ENCODE measurements at regions of chr14 and their contacts with region 1.

Region 1: GRCh38 chr14:56422703-56423213 is 156.8 kb upstream of the TMEM260 start:
- DNase-seq: peak; percentile 26
- H3K4me3 Mint-ChIP-seq: no peak overlapping the region
- H3K27ac Mint-ChIP-seq: no peak overlapping the region
- H3K4me1 Mint-ChIP-seq: no peaks in the 10 kb centered on the region
- H3K27me3 Mint-ChIP-seq: no peaks in the 10 kb centered on the region

Region 2: DNA sequence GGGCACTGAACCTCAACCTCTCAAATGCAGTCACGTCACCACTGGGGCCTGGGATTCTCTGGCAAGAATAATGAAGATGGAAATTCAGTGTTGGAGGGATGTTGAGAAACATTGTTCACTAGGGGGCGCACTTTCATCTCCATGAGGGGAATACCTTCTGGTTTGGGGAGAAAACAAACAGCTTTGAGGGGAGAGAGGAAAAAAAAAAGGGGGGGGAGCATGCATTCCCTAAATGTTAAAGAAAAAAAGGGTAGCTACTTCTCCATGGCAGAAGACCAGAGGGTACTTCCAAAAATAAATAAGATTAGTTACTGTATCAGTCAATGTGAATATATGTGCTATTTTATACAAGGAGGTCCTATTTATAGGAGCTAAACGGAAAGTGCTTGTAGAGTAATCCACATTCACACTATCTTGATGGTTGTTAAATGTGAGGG is 976.5 kb before region 1 on chr14:
- CTCF ChIA-PET with region 1: interaction called, 3 read pairs
- intact Hi-C with region 1: loop called (anchors 1 kb)
- DNase-seq: peak; percentile 76
- H3K4me3 Mint-ChIP-seq: no peak overlapping the region
- H3K27ac Mint-ChIP-seq: no peak overlapping the region
- H3K4me1 Mint-ChIP-seq: peaks cover 13% of the 10 kb centered on the region
- H3K27me3 Mint-ChIP-seq: no peaks in the 10 kb centered on the region

Region 3: DNA sequence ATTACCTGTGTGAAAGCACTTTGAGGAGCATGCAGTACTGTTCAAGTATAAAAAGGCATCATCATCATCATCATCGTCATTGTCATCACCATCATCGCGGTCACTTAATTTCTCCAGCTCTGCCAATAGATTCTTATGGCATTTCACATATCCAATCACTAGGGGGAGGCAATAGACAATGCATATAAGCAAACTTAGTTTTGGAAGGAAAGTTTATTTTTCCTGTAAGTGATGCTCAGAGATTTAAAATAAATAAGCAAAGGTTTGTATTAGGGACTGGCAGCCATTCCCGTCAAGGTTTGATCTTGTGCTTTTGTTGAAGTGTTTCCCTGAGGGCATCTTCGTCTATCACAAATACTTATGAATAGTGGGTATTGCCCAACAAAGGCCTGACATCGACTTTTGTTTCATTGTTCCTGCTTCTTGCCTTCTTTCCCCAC is 715.4 kb before region 1 on chr14:
- CTCF ChIA-PET with region 1: no interaction called
- intact Hi-C with region 1: loop called (anchors 2 kb)
- DNase-seq: no peak
- H3K4me3 Mint-ChIP-seq: no peak overlapping the region
- H3K27ac Mint-ChIP-seq: no peak overlapping the region
- H3K4me1 Mint-ChIP-seq: no peaks in the 10 kb centered on the region
- H3K27me3 Mint-ChIP-seq: no peaks in the 10 kb centered on the region

Region 4: GRCh38 chr14:55731881-55732498 is 690.8 kb before region 1 on chr14:
- CTCF ChIA-PET with region 1: interaction called, 6 read pairs
- intact Hi-C with region 1: loop called (anchors 1 kb)
- DNase-seq: peak; percentile 77
- H3K4me3 Mint-ChIP-seq: no peak overlapping the region
- H3K27ac Mint-ChIP-seq: no peak overlapping the region
- H3K4me1 Mint-ChIP-seq: no peaks in the 10 kb centered on the region
- H3K27me3 Mint-ChIP-seq: no peaks in the 10 kb centered on the region

Region 5: GRCh38 chr14:55846826-55847446 is 575.8 kb before region 1 on chr14:
- CTCF ChIA-PET with region 1: no interaction called
- intact Hi-C with region 1: loop called (anchors 10 kb)
- DNase-seq: no peak
- H3K4me3 Mint-ChIP-seq: no peak overlapping the region
- H3K27ac Mint-ChIP-seq: no peak overlapping the region
- H3K4me1 Mint-ChIP-seq: peaks cover 8% of the 10 kb centered on the region
- H3K27me3 Mint-ChIP-seq: peaks cover 3% of the 10 kb centered on the region

Region 6: DNA sequence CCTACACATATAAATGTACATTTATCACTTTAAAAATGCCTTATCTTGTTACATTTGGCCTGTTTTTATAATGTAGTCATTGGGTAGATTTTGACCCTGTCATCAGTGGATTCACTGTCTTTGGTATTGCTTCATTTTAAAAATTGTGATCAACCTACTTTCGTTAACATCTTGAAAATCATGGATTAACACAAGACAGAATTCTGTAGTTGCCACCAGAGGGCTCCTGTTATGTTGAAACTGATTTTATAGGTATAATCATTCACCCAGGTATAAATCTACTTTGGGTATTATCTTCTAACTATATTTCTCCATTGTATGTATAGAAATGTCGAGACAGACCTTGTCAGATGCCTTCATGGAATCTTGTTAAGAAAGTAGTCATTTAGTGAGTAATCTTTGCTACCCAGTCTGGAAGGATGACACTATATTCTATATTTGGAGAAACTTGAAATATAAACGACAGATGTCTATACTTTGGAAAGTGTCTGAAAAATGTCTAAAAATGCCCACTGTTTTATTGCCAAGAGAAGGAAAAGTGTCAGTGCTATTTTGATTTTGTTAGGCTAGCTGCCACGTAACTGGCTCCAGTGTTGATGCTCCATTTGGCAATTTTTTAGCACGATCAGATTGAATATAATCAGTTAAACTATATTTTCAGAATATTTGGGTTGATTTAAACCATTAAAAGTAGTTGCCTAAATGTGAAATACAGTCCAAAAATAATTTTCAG is 175.1 kb before region 1 on chr14:
- CTCF ChIA-PET with region 1: no interaction called
- intact Hi-C with region 1: loop called (anchors 1 kb)
- DNase-seq: no peak
- H3K4me3 Mint-ChIP-seq: no peak overlapping the region
- H3K27ac Mint-ChIP-seq: no peak overlapping the region
- H3K4me1 Mint-ChIP-seq: no peaks in the 10 kb centered on the region
- H3K27me3 Mint-ChIP-seq: no peaks in the 10 kb centered on the region

Region 7: DNA sequence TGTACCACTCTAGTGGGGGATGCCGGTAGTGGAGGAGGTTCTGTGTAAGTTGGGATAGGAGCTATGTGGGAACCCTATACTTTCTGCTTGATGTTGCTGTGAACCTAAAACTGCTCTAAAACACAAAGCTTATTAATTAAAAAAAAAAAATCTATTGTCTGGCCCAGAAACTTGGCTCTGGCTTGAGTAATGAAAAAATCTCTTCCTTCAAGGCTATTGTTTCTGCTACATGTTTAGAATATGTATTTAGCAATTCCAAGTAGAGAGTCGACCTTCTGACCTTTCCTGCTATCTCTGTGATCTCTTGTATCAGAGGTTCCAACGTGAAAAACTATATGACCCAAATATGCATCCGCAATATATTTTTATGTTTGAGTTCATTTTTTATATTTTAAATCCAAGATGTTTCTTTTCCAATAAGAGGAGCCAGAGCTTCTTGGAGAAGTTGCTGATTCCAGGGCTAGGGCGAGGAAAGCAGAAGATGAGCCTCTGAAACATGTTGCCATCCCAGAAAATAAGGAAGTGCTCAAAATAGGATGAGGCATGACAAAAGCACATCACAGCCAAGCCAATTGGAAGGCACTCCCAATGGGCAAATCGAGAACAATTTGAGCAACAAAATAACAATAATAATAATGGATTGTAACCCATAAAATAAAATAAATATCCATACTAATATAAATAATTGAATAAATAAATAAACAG is 27.8 kb before region 1 on chr14:
- CTCF ChIA-PET with region 1: no interaction called
- intact Hi-C with region 1: no loop called
- DNase-seq: no peak
- H3K4me3 Mint-ChIP-seq: no peak overlapping the region
- H3K27ac Mint-ChIP-seq: no peak overlapping the region
- H3K4me1 Mint-ChIP-seq: no peaks in the 10 kb centered on the region
- H3K27me3 Mint-ChIP-seq: no peaks in the 10 kb centered on the region